Activated CD8-positive, alpha-beta T cell treated with anti-CD3 and anti-CD28 coated beads for 36 hours (primary cell): ENCODE measurements at regions of chr17 and their contacts with region 1.

Region 1: GRCh38 chr17:10072561-10073385 is 125.6 kb downstream of the GAS7 start:
- DNase-seq: no peak
- ATAC-seq: no peak
- H3K4me3 Mint-ChIP-seq: no peak overlapping the region
- H3K27ac Mint-ChIP-seq: no peak overlapping the region
- H3K4me1 Mint-ChIP-seq: peaks cover 2% of the 10 kb centered on the region
- H3K27me3 Mint-ChIP-seq: no peaks in the 10 kb centered on the region
- CTCF ChIP-seq: no peak

Region 2: DNA sequence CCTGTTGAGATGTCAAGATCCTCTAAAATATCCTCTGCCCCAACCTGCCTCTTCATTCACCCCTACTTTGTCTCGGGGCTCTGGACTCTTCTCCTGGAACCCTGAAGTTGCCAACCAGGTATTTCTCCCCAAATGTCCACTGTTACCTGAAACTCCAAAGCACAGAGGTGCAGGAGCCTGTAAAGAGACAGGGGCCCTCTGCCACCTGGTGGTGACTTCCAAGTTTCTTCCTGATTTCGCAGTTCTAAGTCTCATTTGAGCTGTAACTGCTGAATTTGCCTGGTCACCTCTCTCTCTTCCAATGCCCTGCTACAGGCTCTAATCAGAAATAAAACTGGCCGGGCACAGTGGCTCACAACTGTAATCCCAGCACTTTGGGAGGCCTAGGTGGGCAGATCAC is 90.6 kb before region 1 on chr17:
- CTCF ChIA-PET with region 1: no interaction called
- POLR2A ChIA-PET with region 1: no interaction called
- intact Hi-C with region 1: no loop called
- DNase-seq: peak; percentile 14
- ATAC-seq: no peak
- H3K4me3 Mint-ChIP-seq: no peak overlapping the region
- H3K27ac Mint-ChIP-seq: no peak overlapping the region
- H3K4me1 Mint-ChIP-seq: peaks cover 3% of the 10 kb centered on the region
- H3K27me3 Mint-ChIP-seq: no peaks in the 10 kb centered on the region
- CTCF ChIP-seq: peak; percentile 33

Region 3: DNA sequence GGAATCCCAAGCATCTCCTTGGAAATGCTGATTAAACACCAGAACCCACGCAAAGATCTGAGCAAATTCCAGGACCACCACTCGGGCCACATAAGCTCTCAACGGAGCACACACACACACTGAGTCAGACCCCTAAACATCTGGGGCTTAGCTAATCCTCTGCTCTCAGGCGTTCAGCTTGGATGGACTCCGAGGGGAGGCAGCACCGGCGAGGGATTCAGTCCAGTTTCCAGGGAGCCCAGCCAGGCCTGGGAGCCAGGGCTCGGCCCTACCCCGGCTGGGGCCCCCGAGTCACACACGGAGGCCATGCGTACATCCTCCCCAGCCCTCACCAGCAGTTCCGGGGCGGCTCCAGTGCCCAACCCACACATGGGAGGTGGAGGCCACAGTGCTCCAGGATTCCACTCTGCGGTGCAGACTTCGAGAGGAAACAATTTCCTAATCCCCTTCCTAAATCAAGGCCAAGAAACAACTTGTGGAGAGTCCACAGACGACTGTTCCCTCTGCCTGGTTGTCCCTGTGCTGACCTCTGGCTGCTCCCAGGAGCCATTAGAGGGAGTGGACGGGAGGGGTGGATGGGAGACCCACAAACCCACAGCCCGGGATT is 55.1 kb after region 1 on chr17:
- CTCF ChIA-PET with region 1: no interaction called
- POLR2A ChIA-PET with region 1: no interaction called
- intact Hi-C with region 1: loop called (anchors 10 kb)
- DNase-seq: no peak
- ATAC-seq: no peak
- H3K4me3 Mint-ChIP-seq: no peak overlapping the region
- H3K27ac Mint-ChIP-seq: no peak overlapping the region
- H3K4me1 Mint-ChIP-seq: peaks cover 27% of the 10 kb centered on the region
- H3K27me3 Mint-ChIP-seq: no peaks in the 10 kb centered on the region
- CTCF ChIP-seq: no peak